WTC11 (cell line): ENCODE measurements at regions of chr14 and their contacts with region 1.

Region 1: DNA sequence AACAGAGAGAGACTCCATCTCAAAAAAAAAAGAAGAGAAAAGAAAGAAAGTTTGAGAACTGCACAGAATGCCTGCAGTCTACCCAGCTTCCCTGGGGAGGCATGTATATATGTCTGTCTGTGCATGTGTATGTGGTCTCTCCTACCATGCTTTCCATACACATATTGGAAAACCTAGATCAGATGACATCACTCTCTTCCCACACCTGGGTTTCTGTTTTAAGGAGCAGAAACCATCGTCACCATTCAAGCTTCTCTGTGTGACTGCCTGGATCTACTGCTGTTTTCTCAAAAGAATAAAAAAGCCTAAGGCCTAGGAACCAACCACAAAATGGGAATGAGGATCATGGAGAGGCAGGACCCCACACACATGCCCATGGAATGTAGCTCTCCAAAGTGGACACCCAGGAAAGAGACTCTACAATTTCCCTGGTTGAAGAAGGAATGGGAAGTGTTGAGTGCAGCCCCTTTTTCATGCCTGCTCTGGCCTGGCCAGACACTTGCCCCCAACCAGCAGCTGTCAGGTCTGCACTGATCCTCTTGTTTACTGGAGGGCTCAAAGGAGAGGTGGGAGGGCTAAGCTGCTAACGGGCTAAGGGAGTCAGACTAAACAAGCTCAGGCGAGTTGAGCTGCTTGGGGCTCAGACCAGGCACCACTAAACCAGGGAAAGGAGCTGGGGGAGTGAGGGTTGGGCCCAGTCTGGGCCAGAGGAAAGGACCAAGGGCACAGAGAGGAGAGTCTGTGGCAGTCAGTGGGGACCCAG is 7.7 kb upstream of the PCK2 start:
- DNase-seq: no peak
- ATAC-seq: no peak
- H3K4me3 Mint-ChIP-seq: no peak overlapping the region
- H3K27ac Mint-ChIP-seq: no peak overlapping the region
- H3K4me1 Mint-ChIP-seq: peaks cover 17% of the 10 kb centered on the region
- H3K27me3 Mint-ChIP-seq: peaks cover 24% of the 10 kb centered on the region
- CTCF ChIP-seq: no peak

Region 2: GRCh38 chr14:23984891-23985602 is 101.3 kb before region 1 on chr14:
- CTCF ChIA-PET with region 1: no interaction called
- POLR2A ChIA-PET with region 1: no interaction called
- DNase-seq: no peak
- ATAC-seq: no peak
- H3K4me3 Mint-ChIP-seq: no peak overlapping the region
- H3K27ac Mint-ChIP-seq: no peak overlapping the region
- H3K4me1 Mint-ChIP-seq: peaks cover 13% of the 10 kb centered on the region
- H3K27me3 Mint-ChIP-seq: peaks cover 12% of the 10 kb centered on the region
- CTCF ChIP-seq: no peak

Region 3: GRCh38 chr14:24013654-24014514 is 72.5 kb before region 1 on chr14:
- CTCF ChIA-PET with region 1: no interaction called
- POLR2A ChIA-PET with region 1: no interaction called
- DNase-seq: peak; percentile 28
- ATAC-seq: peak; percentile 98
- H3K4me3 Mint-ChIP-seq: no peak overlapping the region
- H3K27ac Mint-ChIP-seq: no peak overlapping the region
- H3K4me1 Mint-ChIP-seq: peaks cover 5% of the 10 kb centered on the region; the same call in 1 of the 2 replicates
- H3K27me3 Mint-ChIP-seq: peaks cover 35% of the 10 kb centered on the region
- CTCF ChIP-seq: peak; percentile 75

Region 4: DNA sequence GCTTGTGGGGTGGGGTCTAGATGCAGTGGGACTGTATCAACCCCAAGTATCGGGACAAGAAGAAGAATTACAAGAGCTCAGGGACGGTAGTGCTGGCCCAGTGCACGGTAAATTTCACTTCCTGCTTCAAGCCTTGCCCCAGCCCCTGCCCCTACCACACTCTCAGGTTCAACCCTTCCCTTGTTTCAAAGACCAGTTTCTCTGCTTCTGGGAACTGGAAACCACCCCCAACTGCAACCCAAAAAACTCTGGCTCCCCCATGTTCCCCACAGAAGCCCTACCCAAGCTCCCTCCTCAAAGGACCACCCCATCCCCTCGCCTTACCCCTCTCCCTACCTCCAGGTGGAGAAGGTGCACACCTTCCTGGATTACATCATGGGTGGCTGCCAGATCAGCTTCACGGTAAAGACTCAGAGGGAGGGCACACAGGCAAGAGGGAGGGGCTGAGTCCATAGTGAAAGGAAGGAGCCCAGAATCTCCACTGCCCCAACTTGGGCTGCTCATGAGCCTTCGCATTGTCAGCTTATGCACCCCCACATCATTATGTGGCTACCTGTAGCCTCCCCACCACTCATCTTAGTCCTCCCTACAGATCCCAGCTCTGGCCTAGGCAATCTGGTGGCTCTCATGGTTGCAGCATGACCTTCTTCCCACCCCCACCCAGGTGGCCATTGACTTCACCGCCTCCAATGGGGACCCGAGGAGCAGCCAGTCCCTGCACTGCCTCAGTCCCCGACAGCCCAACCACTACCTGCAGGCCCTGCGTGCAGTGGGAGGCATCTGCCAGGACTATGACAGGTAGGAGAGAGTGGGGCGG is 10.7 kb before region 1 on chr14:
- CTCF ChIA-PET with region 1: interaction called, 57 read pairs
- POLR2A ChIA-PET with region 1: interaction called, 67 read pairs
- DNase-seq: no peak
- ATAC-seq: no peak
- H3K4me3 Mint-ChIP-seq: no peak overlapping the region
- H3K27ac Mint-ChIP-seq: no peak overlapping the region
- H3K4me1 Mint-ChIP-seq: peaks cover 26% of the 10 kb centered on the region
- H3K27me3 Mint-ChIP-seq: peaks cover 2% of the 10 kb centered on the region
- CTCF ChIP-seq: no peak